Dendritic cell treated with granulocyte-macrophage colony-stimulating factor and Interleukin-4, amounts not matched to agents 40 ng/mL and 50 ng/mL, for 4 days (primary cell): ENCODE measurements at regions of chr4 and their contacts with region 1.

Region 1: GRCh38 chr4:47122592-47123291 is 91.4 kb downstream of the GABRB1 start:
- H3K4me3 Mint-ChIP-seq: no peak overlapping the region
- H3K27ac Mint-ChIP-seq: peak overlapping the region; percentile 63
- H3K4me1 Mint-ChIP-seq: peaks cover 11% of the 10 kb centered on the region
- H3K27me3 Mint-ChIP-seq: peaks cover 17% of the 10 kb centered on the region

Region 2: GRCh38 chr4:47383829-47384427 is 261.2 kb after region 1 on chr4:
- intact Hi-C with region 1: loop called (anchors 10 kb)
- H3K4me3 Mint-ChIP-seq: no peak overlapping the region
- H3K27ac Mint-ChIP-seq: no peak overlapping the region
- H3K4me1 Mint-ChIP-seq: no peaks in the 10 kb centered on the region
- H3K27me3 Mint-ChIP-seq: no peaks in the 10 kb centered on the region